Heart right ventricle (tissue), 16 donors: ENCODE measurements at regions of chr11 and their contacts with region 1.

Region 1: GRCh38 chr11:106262852-106263251 is 185.4 kb downstream of the AASDHPPT start:
- DNase-seq: no peak
- ATAC-seq: no peak
- H3K4me3 ChIP-seq: no peak overlapping the region
- H3K27ac ChIP-seq: no peak overlapping the region
- H3K4me1 ChIP-seq: no peaks in the 10 kb centered on the region
- H3K27me3 ChIP-seq: no peaks in the 10 kb centered on the region
- CTCF ChIP-seq: no peak

Region 2: GRCh38 chr11:106216281-106216680 is 46.6 kb before region 1 on chr11:
- intact Hi-C with region 1: loop called in 1 of 10 experiments (anchors 2 kb)
- DNase-seq: peak; percentile 6 to 53
- ATAC-seq: no peak
- H3K4me3 ChIP-seq: no peak overlapping the region
- H3K27ac ChIP-seq: no peak overlapping the region
- H3K4me1 ChIP-seq: no peaks in the 10 kb centered on the region
- H3K27me3 ChIP-seq: no peaks in the 10 kb centered on the region
- CTCF ChIP-seq: no peak

Region 3: GRCh38 chr11:106331176-106331575 is 68.3 kb after region 1 on chr11:
- intact Hi-C with region 1: no loop called
- DNase-seq: no peak
- ATAC-seq: no peak
- H3K4me3 ChIP-seq: no peak overlapping the region
- H3K27ac ChIP-seq: no peak overlapping the region
- H3K4me1 ChIP-seq: no peaks in the 10 kb centered on the region
- H3K27me3 ChIP-seq: no peaks in the 10 kb centered on the region
- CTCF ChIP-seq: no peak